Activated CD8-positive, alpha-beta T cell treated with anti-CD3 and anti-CD28 coated beads, Interleukin-2, amount 10 ng/mL, durations not matched to agents 7 days and 5 days (primary cell): ENCODE measurements at regions of chr12 and their contacts with region 1.

Region 1: GRCh38 chr12:123232807-123233543 is at the starts of genes MPHOSPH9 and MTRFR:
- DNase-seq: peak; percentile 100
- ATAC-seq: peak; percentile 91
- H3K4me3 Mint-ChIP-seq: peak within 1 kb of the TSS; percentile 97
- H3K27ac Mint-ChIP-seq: peak within 1 kb of the TSS; percentile 97
- H3K4me1 Mint-ChIP-seq: peaks cover 65% of the 10 kb centered on the region
- H3K27me3 Mint-ChIP-seq: no peaks in the 10 kb centered on the region
- total RNA-seq, gene MPHOSPH9: 148 to 149 TPM
- total RNA-seq, gene MTRFR: 28.2 to 30.0 TPM

Region 2: DNA sequence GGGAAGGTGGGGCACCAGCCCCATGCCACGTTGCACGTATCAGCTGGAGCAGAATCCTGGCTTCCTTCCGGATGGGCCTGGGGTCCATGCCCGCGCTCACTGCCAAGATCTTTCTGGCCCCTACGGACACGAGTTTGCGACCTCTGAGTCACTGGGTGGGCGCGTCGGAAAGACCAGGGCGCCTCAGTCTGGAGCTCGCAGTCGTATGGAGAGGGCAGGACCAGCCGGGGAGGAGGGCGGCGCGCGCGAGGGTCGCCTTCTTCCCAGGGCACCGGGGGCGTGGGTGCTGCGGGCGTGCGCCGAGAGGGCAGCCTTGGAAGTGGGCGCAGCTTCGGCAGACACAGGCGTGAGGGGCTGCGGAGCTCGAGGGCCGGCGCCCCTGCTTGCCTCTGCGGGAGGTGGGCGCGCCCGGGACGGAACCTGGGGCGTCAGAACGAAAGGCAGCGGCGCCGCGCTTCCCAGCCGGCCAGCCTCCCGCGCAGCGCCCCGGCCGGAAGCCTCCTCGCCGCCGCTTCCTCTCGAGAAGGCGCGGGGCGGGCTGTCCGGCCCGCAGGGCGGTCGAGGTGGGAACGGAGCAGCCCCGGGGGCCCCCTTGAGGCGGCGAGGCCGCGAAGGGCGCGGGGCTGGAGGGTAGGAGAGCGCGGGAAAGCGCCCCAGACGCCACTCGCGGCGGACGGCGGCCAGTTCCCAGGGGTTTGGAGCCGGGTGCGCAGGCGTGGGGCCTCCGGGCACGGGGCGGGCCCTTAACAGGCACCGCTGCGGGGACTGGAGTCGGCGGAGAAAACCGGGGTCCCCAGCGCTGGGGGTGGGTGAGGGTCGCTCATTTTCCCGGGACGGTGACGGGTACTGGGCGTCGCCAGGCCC is 252.6 kb before region 1 on chr12 and contains the start of gene ARL6IP4:
- CTCF ChIA-PET with region 1: interaction called, 15 read pairs
- POLR2A ChIA-PET with region 1: interaction called, 19 read pairs
- DNase-seq: peak; percentile 73
- ATAC-seq: peak; percentile 78
- H3K4me3 Mint-ChIP-seq: peak within 1 kb of the TSS; percentile 85
- H3K27ac Mint-ChIP-seq: peak within 1 kb of the TSS; percentile 94
- H3K4me1 Mint-ChIP-seq: peaks cover 72% of the 10 kb centered on the region
- H3K27me3 Mint-ChIP-seq: no peaks in the 10 kb centered on the region
- total RNA-seq, gene ARL6IP4: 204 to 213 TPM

Region 3: DNA sequence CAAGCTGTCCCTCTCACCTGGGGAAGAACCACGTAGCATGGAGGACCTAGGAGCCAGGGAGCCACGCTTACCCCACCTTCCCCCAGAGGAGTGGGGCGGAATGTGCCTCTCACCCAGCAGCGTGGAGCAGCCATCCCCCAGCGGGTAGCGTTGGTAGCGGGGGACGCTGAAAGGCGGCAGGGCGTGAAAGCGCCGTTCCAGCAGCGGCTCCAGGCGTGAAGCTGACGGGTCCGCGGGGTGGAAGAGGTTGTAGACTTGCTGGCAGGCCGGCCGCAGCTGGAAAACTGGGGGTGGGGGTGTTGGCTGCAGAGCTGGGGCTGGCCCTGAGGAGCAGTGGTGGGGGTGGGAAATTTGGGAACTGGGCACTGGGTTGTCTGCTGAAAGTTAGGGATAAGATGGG is 240.6 kb before region 1 on chr12:
- CTCF ChIA-PET with region 1: no interaction called
- POLR2A ChIA-PET with region 1: no interaction called
- DNase-seq: no peak
- ATAC-seq: no peak
- H3K4me3 Mint-ChIP-seq: no peak overlapping the region
- H3K27ac Mint-ChIP-seq: no peak overlapping the region
- H3K4me1 Mint-ChIP-seq: peaks cover 3% of the 10 kb centered on the region
- H3K27me3 Mint-ChIP-seq: no peaks in the 10 kb centered on the region

Region 4: DNA sequence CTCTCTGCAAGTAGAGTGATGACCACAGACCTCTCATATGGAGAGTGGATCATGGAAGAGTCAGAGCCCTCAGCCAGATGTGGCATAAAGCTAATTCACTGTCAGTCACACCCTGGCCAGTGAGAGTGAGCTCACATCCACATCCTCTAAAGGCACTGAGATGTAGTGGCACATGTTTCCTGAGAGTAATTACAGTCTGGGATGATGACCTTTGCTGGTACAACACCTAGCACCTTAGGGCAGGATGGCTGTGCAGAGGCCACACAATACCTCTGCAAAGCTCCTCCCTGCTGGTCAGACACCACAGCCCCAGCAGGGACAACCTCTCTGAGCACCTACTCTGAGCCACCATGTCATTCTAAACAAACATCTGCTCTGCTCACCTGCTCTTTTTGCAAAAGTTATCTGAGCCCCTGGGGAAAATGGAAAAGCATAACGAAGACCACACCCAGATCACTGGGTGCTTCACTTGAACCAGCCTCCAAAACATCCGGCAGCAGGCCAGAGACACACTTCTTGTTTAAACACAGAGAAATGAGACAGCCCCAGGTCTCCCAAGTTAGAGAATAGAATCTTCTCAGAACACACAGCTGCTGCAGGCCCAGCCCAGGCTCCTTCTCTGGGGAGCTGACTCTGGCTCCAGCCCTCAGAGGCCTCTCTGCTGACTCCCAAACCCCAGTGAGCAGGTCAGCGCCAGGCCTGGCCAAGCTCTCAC is 112.4 kb before region 1 on chr12:
- CTCF ChIA-PET with region 1: interaction called, 12 read pairs
- POLR2A ChIA-PET with region 1: interaction called, 4 read pairs
- DNase-seq: peak; percentile 54
- ATAC-seq: peak; percentile 61
- H3K4me3 Mint-ChIP-seq: peak overlapping the region; percentile 26
- H3K27ac Mint-ChIP-seq: peak overlapping the region; percentile 93
- H3K4me1 Mint-ChIP-seq: peaks cover 47% of the 10 kb centered on the region
- H3K27me3 Mint-ChIP-seq: no peaks in the 10 kb centered on the region

Region 5: GRCh38 chr12:123250484-123251383 is 17.8 kb after region 1 on chr12:
- CTCF ChIA-PET with region 1: interaction called, 21 read pairs
- POLR2A ChIA-PET with region 1: interaction called, 7 read pairs
- DNase-seq: no peak
- ATAC-seq: no peak
- H3K4me3 Mint-ChIP-seq: no peak overlapping the region
- H3K27ac Mint-ChIP-seq: peak overlapping the region; percentile 55
- H3K4me1 Mint-ChIP-seq: peaks cover 48% of the 10 kb centered on the region
- H3K27me3 Mint-ChIP-seq: no peaks in the 10 kb centered on the region

Region 6: DNA sequence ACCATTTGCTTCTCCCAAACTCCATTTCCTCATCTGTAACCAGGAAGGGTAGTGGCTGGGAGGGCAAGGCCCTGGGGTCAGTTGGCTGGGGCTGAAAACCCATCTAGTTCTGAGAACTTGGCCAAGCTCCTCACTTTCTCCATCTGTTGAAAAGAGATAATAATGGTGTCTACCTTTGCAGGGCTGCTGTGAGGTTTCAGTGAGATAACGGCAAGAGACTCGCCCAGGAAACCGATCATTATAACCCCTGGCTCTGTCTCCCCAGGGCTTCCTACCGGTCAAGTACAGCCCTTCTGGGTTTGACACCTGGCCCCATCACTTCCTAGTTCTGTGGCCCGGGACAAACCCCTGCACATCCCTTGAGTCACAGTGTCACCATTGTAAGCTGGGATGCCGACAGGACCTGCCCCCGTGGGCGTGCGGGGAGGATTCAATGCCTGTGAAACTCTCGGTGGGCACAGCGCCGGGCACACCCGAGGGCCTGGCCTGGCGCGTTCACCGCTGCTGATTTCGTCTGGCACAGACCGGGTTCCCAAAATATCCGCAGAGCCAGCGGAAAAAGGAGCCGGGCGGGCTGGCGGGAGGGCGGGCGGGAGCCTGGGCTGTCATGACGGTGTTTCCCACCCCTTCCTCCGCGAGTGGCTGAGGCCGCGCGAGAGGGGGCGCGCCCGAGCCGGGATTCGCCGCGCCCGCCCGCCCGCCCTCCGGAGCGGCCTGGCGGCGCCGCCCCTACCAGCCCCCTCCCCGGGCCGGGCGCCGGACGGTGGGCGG is 155.4 kb after region 1 on chr12:
- CTCF ChIA-PET with region 1: interaction called, 5 read pairs
- POLR2A ChIA-PET with region 1: interaction called, 13 read pairs
- DNase-seq: peak; percentile 77
- ATAC-seq: peak; percentile 64
- H3K4me3 Mint-ChIP-seq: peak overlapping the region; percentile 86
- H3K27ac Mint-ChIP-seq: peak overlapping the region; percentile 93
- H3K4me1 Mint-ChIP-seq: peaks cover 54% of the 10 kb centered on the region
- H3K27me3 Mint-ChIP-seq: no peaks in the 10 kb centered on the region